ENCODE measurements at regions of chr6 and their contacts with region 1.

Region 1: DNA sequence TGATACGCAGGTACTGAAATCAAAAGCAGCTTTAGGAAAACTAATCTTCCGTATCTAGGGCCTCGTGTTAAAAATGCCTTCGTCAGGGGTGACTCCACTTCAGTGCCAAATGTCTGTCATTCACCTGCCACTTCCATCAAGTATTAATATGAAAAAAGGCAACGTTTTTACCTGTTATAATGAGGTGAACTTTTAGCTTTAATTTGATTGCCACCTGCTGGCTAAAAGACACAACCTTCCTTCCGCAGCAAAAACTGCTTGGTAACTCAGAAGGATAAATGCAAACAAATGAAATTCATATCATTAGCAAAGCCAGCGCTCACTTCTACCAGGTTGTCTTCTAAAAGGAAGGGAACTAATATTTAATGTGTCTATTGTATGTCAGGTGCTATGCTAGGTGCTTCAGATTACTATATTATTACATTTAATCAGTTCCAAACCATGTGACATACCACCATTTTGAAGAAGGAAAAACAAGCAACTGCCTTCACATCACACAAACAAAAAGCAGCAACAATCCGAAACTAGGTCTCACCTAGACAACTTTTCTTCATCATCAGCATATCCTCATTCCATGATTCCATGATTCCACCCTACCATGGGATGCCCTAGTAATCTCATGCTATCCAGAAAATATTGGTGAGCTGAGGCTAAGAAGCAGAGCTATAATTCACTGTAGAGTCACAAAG is 20.6 kb upstream of the ARHGAP18 start:
- DNase-seq: peak; percentile 30
- H3K4me3 Mint-ChIP-seq: no peak overlapping the region
- H3K27ac Mint-ChIP-seq: no peak overlapping the region
- H3K4me1 Mint-ChIP-seq: peaks cover 16% of the 10 kb centered on the region
- H3K27me3 Mint-ChIP-seq: no peaks in the 10 kb centered on the region

Region 2: DNA sequence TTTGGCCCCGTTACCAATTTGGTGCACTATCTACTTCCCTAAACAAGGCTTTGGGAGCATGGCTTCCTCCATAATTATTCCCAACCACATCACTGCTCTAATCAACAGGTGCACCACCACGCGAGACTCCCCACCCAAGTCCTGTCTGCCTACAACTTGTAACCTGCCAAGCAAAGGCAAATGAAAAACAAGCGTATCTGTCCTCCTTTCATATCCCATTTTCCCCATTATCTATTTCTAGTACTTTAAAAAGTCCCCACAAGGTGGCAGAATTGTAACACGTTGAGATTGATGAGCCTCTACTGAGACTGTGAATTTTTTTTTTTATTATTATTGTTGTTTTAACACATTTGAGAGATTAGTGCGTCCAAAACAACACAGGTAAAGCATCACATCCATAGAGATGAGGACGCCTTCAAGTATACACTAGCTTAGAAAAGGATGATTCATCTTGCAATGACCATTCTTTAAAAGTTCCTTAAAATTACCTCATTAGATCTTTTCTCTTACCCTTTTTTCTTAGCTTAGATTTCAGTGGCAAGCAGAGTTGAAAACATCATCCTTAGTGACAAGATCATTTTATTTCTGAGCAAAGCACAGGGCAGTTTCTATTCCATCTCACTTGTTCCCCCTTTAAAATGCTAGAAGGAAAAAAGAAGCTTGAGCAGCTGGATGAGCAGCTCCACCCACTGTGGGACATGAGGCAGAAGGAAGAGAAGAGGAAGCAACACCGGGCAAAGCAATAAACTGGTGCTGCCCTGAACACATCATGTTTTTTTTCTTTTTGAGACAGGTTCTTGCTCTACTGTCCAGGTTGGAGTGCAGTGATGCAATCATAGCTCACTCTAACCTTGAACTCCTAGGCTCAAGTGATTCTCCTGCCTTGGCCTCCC is 231.4 kb before region 1 on chr6:
- CTCF ChIA-PET with region 1: interaction called, 13 read pairs
- POLR2A ChIA-PET with region 1: no interaction called
- DNase-seq: no peak
- H3K4me3 Mint-ChIP-seq: peak overlapping the region; percentile 18
- H3K27ac Mint-ChIP-seq: no peak overlapping the region
- H3K4me1 Mint-ChIP-seq: peaks cover 34% of the 10 kb centered on the region
- H3K27me3 Mint-ChIP-seq: no peaks in the 10 kb centered on the region

Region 3: GRCh38 chr6:129567374-129567773 is 163.2 kb before region 1 on chr6:
- CTCF ChIA-PET with region 1: no interaction called
- POLR2A ChIA-PET with region 1: no interaction called
- DNase-seq: peak; percentile 44
- H3K4me3 Mint-ChIP-seq: no peak overlapping the region
- H3K27ac Mint-ChIP-seq: no peak overlapping the region
- H3K4me1 Mint-ChIP-seq: no peaks in the 10 kb centered on the region
- H3K27me3 Mint-ChIP-seq: peaks cover 5% of the 10 kb centered on the region

Region 4: GRCh38 chr6:129672881-129673643 is 57.6 kb before region 1 on chr6:
- CTCF ChIA-PET with region 1: interaction called, 47 read pairs
- POLR2A ChIA-PET with region 1: interaction called, 5 read pairs
- DNase-seq: peak; percentile 34
- H3K4me3 Mint-ChIP-seq: peak overlapping the region; percentile 68
- H3K27ac Mint-ChIP-seq: peak overlapping the region; percentile 92
- H3K4me1 Mint-ChIP-seq: peaks cover 63% of the 10 kb centered on the region
- H3K27me3 Mint-ChIP-seq: no peaks in the 10 kb centered on the region

Region 5: DNA sequence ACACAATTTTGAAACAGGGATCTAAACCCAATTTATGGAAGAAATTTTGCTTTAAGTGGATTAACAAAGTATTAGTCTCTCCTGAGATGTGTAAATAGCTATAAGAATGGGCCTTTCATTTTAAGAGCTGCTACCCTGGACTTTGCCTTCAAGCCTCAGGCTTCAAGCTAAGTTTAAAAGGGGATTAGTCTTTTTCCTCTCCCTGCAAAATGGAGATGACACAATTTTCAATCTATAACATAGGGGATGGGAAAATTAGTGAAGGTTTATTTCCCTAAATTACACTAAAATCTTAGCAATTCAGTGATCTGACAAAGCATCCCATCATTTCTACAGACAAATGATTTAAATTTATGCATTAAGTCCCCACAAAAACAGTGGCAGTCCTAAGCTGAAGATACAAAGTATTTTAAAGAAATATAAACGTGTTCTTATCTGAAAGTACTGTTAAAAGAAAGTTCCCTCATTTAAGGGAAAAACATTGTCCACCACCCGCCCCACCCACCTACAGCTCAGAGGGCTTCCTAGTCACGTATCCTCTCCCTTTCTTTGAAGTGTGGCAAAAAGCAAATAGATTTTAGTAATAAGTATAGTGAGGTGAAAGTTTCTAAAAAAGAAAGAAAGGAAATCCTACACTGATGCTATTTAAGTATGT is 35.1 kb before region 1 on chr6:
- CTCF ChIA-PET with region 1: no interaction called
- POLR2A ChIA-PET with region 1: no interaction called
- DNase-seq: peak; percentile 42
- H3K4me3 Mint-ChIP-seq: peak overlapping the region; percentile 12
- H3K27ac Mint-ChIP-seq: peak overlapping the region; percentile 18
- H3K4me1 Mint-ChIP-seq: peaks cover 41% of the 10 kb centered on the region
- H3K27me3 Mint-ChIP-seq: peaks cover 5% of the 10 kb centered on the region

Region 6: GRCh38 chr6:129755787-129756186 is 25.2 kb after region 1 on chr6:
- CTCF ChIA-PET with region 1: no interaction called
- POLR2A ChIA-PET with region 1: no interaction called
- DNase-seq: no peak
- H3K4me3 Mint-ChIP-seq: no peak overlapping the region
- H3K27ac Mint-ChIP-seq: no peak overlapping the region
- H3K4me1 Mint-ChIP-seq: peaks cover 12% of the 10 kb centered on the region
- H3K27me3 Mint-ChIP-seq: peaks cover 2% of the 10 kb centered on the region

Region 7: GRCh38 chr6:129936329-129937165 is 205.9 kb after region 1 on chr6:
- CTCF ChIA-PET with region 1: no interaction called
- POLR2A ChIA-PET with region 1: no interaction called
- DNase-seq: peak; percentile 37
- H3K4me3 Mint-ChIP-seq: no peak overlapping the region
- H3K27ac Mint-ChIP-seq: no peak overlapping the region
- H3K4me1 Mint-ChIP-seq: no peaks in the 10 kb centered on the region
- H3K27me3 Mint-ChIP-seq: peaks cover 27% of the 10 kb centered on the region

Measured in activated CD4-positive, alpha-beta memory T cell treated with anti-CD3 and anti-CD28 coated beads, Interleukin-2, amount 10 ng/mL, durations not matched to agents 7 days and 5 days (primary cell).